ENCODE measurements at regions of chr5 and their contacts with region 1.

Region 1: GRCh38 chr5:154196955-154197652 is 6.6 kb downstream of the GALNT10 start:
- DNase-seq: no peak
- H3K4me3 ChIP-seq: no peak overlapping the region
- H3K27ac ChIP-seq: peak overlapping the region in 1 of 2 donors; percentile 4
- H3K4me1 ChIP-seq: peaks cover 16% of the 10 kb centered on the region
- H3K27me3 ChIP-seq: no peaks in the 10 kb centered on the region
- CTCF ChIP-seq: peak in 1 of 3 donors; percentile 17
- EP300 ChIP-seq: no peak
- POLR2A ChIP-seq: no peak

Region 2: DNA sequence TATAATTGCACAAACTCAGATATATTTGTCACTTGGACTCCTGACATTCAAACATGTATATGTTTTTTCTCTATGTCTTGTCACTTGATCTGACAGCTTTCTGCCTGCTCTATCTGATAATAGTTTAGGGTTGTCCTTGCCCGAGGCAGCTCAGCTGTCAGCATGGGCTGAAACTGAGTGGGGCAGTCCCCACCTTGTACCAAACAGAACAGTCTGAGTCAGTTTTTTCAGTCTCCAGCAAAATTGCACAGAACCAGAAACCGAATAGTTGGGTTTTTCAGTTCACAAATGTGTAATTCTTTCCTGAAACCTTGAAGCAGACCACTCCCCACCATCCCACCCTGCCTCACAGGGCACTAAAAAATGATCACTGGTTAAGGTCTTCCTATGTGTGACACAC is 290.4 kb after region 1 on chr5:
- intact Hi-C with region 1: no loop called
- DNase-seq: no peak
- H3K4me3 ChIP-seq: no peak overlapping the region
- H3K27ac ChIP-seq: no peak overlapping the region
- H3K4me1 ChIP-seq: no peaks in the 10 kb centered on the region
- H3K27me3 ChIP-seq: peaks cover 10% of the 10 kb centered on the region
- CTCF ChIP-seq: no peak
- EP300 ChIP-seq: no peak
- POLR2A ChIP-seq: no peak

Region 3: DNA sequence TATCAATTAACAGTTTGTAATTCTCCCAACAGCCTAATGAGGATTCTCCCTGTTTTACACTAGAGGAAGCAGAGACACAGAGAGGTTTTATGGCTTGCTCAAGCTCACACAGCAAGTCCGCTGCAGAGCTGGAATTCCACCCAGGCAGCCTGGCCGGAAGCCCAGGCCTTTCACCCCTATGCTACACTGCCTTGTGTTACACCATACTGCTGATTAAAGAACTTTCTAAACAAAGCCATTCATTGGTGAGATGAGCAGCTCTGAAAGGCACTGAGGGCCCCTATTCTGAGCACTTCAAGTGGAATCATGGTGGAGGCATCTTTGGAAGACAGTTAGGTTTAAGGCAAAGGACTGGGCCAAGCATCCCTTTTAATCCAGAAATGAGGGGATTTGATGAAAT is 543.4 kb after region 1 on chr5:
- intact Hi-C with region 1: loop called in 2 of 4 experiments (anchors 5 kb)
- DNase-seq: peak in 4 of 5 donors; percentile 27 to 58 (median 36)
- H3K4me3 ChIP-seq: no peak overlapping the region
- H3K27ac ChIP-seq: no peak overlapping the region
- H3K4me1 ChIP-seq: no peaks in the 10 kb centered on the region
- H3K27me3 ChIP-seq: no peaks in the 10 kb centered on the region
- CTCF ChIP-seq: no peak
- EP300 ChIP-seq: no peak
- POLR2A ChIP-seq: no peak

Measured in ovary (tissue), 10 donors.